HEK293 (cell line): ENCODE measurements at regions of chr1 and their contacts with region 1.

Region 1: GRCh38 chr1:44594871-44595746 is 79.2 kb downstream of the TMEM53 start:
- H3K4me3 ChIP-seq: no peak overlapping the region
- H3K27ac ChIP-seq: no peak overlapping the region
- H3K4me1 ChIP-seq: no peaks in the 10 kb centered on the region
- CTCF ChIP-seq: peak; percentile 87

Region 2: GRCh38 chr1:44377925-44378784 is 217.0 kb before region 1 on chr1:
- CTCF ChIA-PET with region 1: interaction called, 90 read pairs
- POLR2A ChIA-PET with region 1: no interaction called
- H3K4me3 ChIP-seq: no peak overlapping the region
- H3K27ac ChIP-seq: no peak overlapping the region
- H3K4me1 ChIP-seq: no peaks in the 10 kb centered on the region
- CTCF ChIP-seq: peak; percentile 54

Region 3: DNA sequence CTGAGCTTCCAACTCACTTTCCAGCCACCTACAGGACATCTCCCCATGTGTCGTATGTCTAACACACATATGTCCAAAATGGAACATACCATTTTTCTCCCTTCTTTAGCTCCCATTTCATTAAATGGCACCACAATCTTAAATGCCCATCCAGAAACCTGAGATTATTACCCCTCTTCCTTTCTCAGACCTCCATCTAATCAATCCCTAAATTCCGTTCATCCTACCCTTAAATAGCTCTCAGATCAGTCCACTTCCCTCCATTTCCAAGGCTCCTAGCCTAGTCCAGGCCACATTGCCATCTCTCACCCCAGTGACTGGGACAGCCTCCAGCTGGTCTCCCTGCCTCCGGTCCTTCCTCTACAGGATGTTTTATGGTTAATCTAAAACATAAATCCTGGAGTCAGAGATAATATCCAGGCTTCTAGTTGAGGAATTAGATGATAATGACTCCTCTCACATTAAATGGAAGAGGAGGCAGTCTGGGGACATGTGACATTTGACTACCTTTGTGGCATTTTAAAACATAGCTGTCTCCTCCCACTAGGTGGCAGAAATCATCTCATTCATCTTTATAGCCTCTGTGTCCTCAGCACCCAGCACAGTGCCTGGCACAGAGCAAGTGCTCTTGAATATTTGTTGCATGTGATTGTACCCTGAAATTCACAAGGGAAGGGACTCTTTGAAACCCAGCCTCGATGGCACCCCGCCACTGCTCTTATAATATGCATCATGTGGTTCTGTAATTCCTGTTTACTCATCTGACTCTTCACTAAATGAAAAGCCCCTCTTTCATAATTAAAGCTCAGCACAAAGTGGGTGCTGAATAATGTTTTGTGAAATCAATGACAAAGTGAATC is 23.2 kb before region 1 on chr1:
- CTCF ChIA-PET with region 1: interaction called, 30 read pairs
- POLR2A ChIA-PET with region 1: no interaction called
- H3K4me3 ChIP-seq: no peak overlapping the region
- H3K27ac ChIP-seq: no peak overlapping the region
- H3K4me1 ChIP-seq: no peaks in the 10 kb centered on the region
- CTCF ChIP-seq: peak; percentile 37; the same call in 1 of the 2 replicates

Region 4: DNA sequence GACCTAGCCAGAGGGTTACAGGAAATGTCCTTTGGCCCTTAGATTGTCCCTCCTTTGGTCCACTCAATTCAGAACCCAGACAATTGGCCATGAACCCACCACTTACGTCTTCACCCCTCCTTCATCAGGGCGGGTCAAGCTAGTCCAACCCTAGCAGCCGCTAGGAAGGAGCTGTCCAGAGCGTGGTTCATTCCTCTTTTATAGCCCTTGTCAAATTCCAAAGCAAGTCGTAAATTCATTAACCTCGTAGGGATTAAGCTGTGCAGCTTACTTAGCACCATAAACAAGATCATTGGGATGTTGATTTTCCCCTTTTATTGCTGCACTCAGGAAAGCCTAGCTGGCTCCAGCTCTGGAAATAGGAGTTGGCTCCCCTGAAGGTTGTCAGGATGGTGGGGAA is 10.9 kb before region 1 on chr1:
- CTCF ChIA-PET with region 1: interaction called, 14 read pairs
- POLR2A ChIA-PET with region 1: no interaction called
- H3K4me3 ChIP-seq: no peak overlapping the region
- H3K27ac ChIP-seq: no peak overlapping the region
- H3K4me1 ChIP-seq: no peaks in the 10 kb centered on the region
- CTCF ChIP-seq: no peak

Region 5: GRCh38 chr1:44609412-44609767 is 14.3 kb after region 1 on chr1:
- CTCF ChIA-PET with region 1: interaction called, 20 read pairs
- POLR2A ChIA-PET with region 1: no interaction called
- H3K4me3 ChIP-seq: no peak overlapping the region
- H3K27ac ChIP-seq: no peak overlapping the region
- H3K4me1 ChIP-seq: 0 out of 2 replicates have a peak, but pooled peaks cover under 1% of the 10 kb centered on the region
- CTCF ChIP-seq: peak; percentile 37; the same call in 1 of the 2 replicates

Region 6: DNA sequence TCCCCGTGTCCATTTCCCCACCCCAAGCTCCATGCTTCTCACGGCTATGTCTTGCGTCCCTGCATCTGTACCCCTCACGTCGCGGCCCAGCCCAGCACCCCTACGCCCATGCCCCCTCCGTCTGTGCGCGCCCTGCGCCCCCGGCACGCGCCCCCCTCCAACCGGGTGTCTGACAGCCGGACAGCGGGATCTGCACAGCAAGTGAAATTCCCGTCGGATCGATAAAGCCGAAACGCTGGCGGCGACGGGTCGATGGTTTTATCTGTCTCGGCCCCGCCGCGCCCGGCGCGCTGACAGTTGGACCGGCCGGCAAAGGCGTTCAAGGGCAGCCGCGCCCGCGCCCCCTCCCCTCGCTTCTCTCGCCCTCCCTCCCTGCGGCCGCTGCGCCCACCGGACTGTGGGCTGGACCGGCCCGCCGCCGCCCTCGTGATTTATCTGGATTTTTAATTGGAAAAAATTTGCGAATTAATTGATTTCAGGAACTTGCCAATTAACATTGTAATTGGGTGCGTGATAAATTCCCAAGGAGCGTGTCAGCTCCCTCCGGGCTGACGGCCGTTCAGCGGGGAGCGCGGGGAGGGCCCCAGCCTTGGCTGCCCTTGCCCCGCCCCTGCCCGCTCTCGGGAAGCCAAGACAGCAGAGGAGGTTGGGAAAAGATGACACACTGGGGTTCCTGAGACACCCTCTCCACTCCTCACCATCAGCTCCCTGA is 22.0 kb after region 1 on chr1:
- CTCF ChIA-PET with region 1: interaction called, 12 read pairs
- POLR2A ChIA-PET with region 1: no interaction called
- H3K4me3 ChIP-seq: peak overlapping the region; percentile 34
- H3K27ac ChIP-seq: no peak overlapping the region
- H3K4me1 ChIP-seq: peaks cover 10% of the 10 kb centered on the region
- CTCF ChIP-seq: no peak